Astrocyte of the cerebellum (primary cell): ENCODE measurements at regions of chr22 and their contacts with region 1.

Region 1: GRCh38 chr22:39319270-39320022 is at the start of gene RPL3:
- DNase-seq: peak; percentile 97
- H3K4me3 ChIP-seq: peak within 1 kb of the TSS; percentile 88
- CTCF ChIP-seq: peak; percentile 9

Region 2: DNA sequence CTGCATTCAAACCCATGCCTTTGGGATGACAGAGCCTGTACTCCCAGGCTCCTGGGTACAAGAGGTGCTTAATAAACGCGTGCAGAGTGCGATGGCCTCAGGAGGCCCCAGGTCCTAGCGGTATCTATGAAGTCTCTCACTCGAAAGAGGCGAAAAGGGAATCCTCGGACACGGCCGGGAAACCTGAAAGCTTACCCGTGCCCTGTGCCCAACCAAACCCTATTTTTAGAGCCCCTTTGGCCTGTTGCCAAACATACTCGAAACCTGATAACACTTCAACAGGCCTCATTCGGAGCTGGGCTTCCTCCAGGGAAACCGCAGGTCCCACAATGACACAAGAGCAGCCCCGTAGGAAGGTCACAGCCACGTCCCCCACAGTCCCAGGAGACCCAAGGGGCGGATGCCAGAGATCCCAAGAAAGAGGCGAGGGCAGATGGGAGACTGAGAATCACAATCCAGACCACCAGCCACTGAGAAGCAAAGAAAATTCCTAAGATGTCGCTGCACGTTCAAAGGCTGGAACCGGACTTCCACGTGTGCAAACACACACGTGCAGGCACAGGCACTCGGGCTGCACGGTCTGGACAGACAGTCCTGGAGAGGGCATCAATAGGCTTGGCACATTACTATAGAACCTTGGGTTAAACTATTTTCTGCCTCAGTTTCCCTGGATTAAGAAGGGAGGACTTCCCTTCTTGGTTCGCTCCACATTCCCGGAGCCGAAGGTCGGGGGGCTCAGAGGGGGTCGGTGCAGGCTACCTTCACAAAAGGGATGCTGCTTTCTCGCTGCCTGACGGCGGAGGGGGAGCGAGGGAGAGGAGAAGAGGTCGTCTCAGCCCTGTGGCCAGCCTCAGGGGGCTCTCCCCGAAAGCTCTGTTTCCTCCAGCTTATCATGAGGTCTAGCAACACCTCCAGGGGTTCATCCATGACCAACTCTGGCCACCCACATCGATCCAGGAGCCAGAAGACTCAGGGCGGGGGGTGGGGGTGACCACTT is 82.8 kb before region 1 on chr22:
- in situ Hi-C with region 1: loop called (anchors 5 kb)
- DNase-seq: no peak
- H3K4me3 ChIP-seq: no peak overlapping the region
- CTCF ChIP-seq: no peak

Region 3: GRCh38 chr22:39253435-39254070 is 65.9 kb before region 1 on chr22:
- in situ Hi-C with region 1: no loop called
- DNase-seq: peak; percentile 60
- H3K4me3 ChIP-seq: no peak overlapping the region
- CTCF ChIP-seq: no peak